ENCODE measurements at regions of chr5 and their contacts with region 1.

Region 1: DNA sequence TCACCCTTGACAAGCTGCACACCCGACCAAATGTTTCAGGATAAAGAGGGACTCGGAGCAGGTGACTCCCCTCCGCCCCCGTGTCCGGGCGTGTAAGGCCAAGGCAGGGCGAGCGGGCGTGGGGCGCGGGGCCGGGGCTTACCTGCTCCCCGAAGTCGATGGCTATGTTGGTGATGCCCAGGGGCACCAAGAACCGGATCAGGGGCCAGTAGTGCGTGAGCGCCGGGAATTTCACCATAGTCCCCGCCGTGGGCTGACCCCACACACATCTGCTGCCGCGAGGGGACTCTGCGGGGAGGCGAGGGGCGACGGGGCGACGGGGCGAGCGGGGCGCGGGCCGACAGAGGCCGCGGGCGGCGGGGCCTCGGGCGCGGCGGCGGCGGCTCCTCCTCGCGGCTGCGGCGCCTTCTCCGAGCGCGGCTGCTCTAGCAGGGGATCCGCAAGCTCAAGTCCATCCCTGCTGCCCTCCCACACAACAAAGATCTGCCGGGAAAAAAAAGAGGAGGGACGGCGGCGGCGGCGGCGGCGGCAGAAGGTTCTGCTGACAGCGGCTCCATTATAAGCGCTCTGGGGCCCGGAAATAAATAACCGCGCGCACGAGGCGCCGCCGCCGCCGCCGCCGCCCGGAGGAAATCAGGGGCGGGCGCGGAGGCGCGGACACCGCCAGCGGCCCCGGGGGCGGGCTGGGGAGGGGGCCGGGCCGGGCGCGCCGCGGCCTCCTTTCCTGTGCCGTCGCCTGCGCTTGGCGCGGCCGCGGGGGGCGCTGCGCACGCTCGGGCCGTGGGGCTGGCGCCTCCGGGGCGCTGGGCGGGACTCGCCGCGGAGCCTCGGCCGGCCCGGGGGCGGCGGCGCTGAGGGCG is at the start of gene ANKH:
- DNase-seq: peak; percentile 78 to 85
- ATAC-seq: peak; percentile 76 to 93 (median 86)
- H3K4me3 ChIP-seq: peak within 1 kb of the TSS; percentile 79 to 98 (median 88)
- H3K27ac ChIP-seq: peak within 1 kb of the TSS; percentile 96 to 100 (median 98)
- H3K4me1 ChIP-seq: peaks cover 0 to 46% (median 25%) of the 10 kb centered on the region in 9 donors
- H3K27me3 ChIP-seq: no peaks in the 10 kb centered on the region
- CTCF ChIP-seq: peak in 3 of 9 donors; percentile 17 to 45 (median 38)
- total RNA-seq, gene ANKH: 155 to 256 (median 215) TPM

Region 2: DNA sequence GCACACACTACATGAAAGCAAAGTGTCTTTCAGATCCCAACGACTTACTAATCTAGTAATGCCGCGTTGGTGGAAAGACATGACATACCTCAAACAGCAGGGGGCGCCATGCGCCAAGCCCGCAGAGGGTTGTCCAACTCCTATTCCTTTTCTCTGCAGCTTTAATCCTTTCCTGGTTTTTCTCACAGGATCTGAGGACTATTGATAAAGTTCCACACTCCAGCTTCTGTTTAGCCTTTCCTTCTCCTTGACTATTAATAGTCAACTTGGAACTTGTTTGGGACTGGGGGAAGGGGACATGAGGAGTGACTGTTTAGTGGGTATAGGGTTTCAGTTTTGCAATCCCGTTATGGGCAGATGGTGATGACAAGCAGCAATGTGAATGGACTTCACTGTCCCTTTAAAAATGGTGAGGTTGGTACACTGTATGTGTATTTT is 144.0 kb before region 1 on chr5:
- intact Hi-C with region 1: loop called in 9 of 10 experiments (anchors 1 to 10 kb)
- DNase-seq: peak; percentile 80 to 84
- ATAC-seq: peak; percentile 49 to 86 (median 74)
- H3K4me3 ChIP-seq: no peak overlapping the region
- H3K27ac ChIP-seq: peak overlapping the region in 5 of 10 donors; percentile 12 to 64 (median 39)
- H3K4me1 ChIP-seq: peaks cover 6 to 57% (median 22%) of the 10 kb centered on the region in 9 donors
- H3K27me3 ChIP-seq: no peaks in the 10 kb centered on the region
- CTCF ChIP-seq: peak; percentile 91 to 98 (median 96)

Region 3: GRCh38 chr5:14753912-14754311 is 117.5 kb before region 1 on chr5:
- intact Hi-C with region 1: loop called in 3 of 10 experiments (anchors 5 to 10 kb)
- DNase-seq: peak in 1 of 2 donors; percentile 33
- ATAC-seq: peak in 6 of 8 donors; percentile 48 to 88 (median 72)
- H3K4me3 ChIP-seq: no peak overlapping the region
- H3K27ac ChIP-seq: peak overlapping the region; percentile 16 to 78 (median 64)
- H3K4me1 ChIP-seq: peaks cover 0 to 37% (median 6%) of the 10 kb centered on the region in 9 donors
- H3K27me3 ChIP-seq: no peaks in the 10 kb centered on the region
- CTCF ChIP-seq: peak in 2 of 9 donors; percentile 14 to 21

Region 4: GRCh38 chr5:14816999-14817761 is 54.3 kb before region 1 on chr5:
- intact Hi-C with region 1: loop called in 1 of 10 experiments (anchors 5 kb)
- DNase-seq: no peak
- ATAC-seq: peak in 3 of 8 donors; percentile 47 to 83 (median 53)
- H3K4me3 ChIP-seq: no peak overlapping the region
- H3K27ac ChIP-seq: peak overlapping the region in 1 of 10 donors; percentile 64
- H3K4me1 ChIP-seq: peaks cover 3 to 71% (median 42%) of the 10 kb centered on the region in 9 donors
- H3K27me3 ChIP-seq: no peaks in the 10 kb centered on the region
- CTCF ChIP-seq: no peak

Region 5: GRCh38 chr5:14946815-14947640 is 75.6 kb after region 1 on chr5:
- intact Hi-C with region 1: loop called in 1 of 10 experiments (anchors 5 kb)
- DNase-seq: peak in 1 of 2 donors; percentile 28
- ATAC-seq: peak; percentile 55 to 82 (median 66)
- H3K4me3 ChIP-seq: no peak overlapping the region
- H3K27ac ChIP-seq: no peak overlapping the region
- H3K4me1 ChIP-seq: peaks cover 0 to 13% (median 8%) of the 10 kb centered on the region in 9 donors
- H3K27me3 ChIP-seq: no peaks in the 10 kb centered on the region
- CTCF ChIP-seq: peak in 8 of 9 donors; percentile 18 to 64 (median 50)